ENCODE measurements at regions of chr22 and their contacts with region 1.

Region 1: GRCh38 chr22:45235101-45235777 is 5.5 kb downstream of the KIAA0930 start:
- DNase-seq: peak; percentile 81
- ATAC-seq: peak; percentile 87
- H3K4me3 Mint-ChIP-seq: no peak overlapping the region
- H3K27ac Mint-ChIP-seq: peak overlapping the region; percentile 70
- H3K4me1 Mint-ChIP-seq: peaks cover 32% of the 10 kb centered on the region
- H3K27me3 Mint-ChIP-seq: no peaks in the 10 kb centered on the region

Region 2: GRCh38 chr22:44940130-44940529 is 295.1 kb before region 1 on chr22:
- CTCF ChIA-PET with region 1: no interaction called
- DNase-seq: no peak
- ATAC-seq: no peak
- H3K4me3 Mint-ChIP-seq: no peak overlapping the region
- H3K27ac Mint-ChIP-seq: no peak overlapping the region
- H3K4me1 Mint-ChIP-seq: no peaks in the 10 kb centered on the region
- H3K27me3 Mint-ChIP-seq: no peaks in the 10 kb centered on the region

Region 3: DNA sequence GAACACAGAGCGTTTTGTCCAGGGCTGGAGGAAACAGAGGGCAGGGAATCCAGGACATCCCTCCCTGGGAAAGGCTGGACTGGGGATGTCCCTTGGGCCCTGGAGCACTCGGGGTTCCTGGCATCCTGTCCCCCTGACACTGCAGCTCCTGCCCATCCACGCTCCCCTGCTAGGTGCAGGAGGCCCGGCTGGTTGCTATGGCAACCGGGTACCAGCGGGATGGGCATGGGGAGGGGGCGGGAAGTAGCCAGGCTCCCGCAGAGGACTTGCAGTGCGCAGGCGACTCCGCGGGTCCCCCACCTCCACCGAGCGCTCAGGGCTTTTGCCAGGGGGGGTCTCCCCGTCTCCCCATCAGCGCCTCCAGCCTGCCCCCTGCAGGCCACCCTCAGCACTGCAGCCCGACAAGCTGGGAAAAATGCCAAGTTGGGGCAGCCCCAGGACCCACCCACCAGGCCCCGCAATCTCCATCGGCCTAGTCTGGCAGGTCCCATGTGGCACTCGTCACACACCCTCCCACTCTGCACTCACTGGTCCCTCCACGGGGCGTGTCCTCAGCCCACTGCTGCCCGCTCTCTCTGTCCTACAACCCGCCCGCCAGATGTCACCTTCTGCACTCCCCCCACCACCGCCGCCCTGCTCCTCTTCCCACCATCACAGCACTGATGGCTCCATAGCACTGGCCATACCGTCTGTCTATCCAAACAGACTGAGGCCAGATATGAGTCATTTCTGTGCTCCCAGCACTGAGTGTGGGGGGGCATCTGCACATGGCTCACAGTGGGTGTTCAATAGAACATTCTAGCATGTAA is 26.0 kb before region 1 on chr22:
- CTCF ChIA-PET with region 1: interaction called, 15 read pairs
- DNase-seq: no peak
- ATAC-seq: peak; percentile 23
- H3K4me3 Mint-ChIP-seq: no peak overlapping the region
- H3K27ac Mint-ChIP-seq: no peak overlapping the region
- H3K4me1 Mint-ChIP-seq: peaks cover 7% of the 10 kb centered on the region
- H3K27me3 Mint-ChIP-seq: no peaks in the 10 kb centered on the region

Measured in activated CD8-positive, alpha-beta memory T cell treated with anti-CD3 and anti-CD28 coated beads, Interleukin-2, amount 10 ng/mL, durations not matched to agents 7 days and 5 days (primary cell).